MCF 10A (cell line): ENCODE measurements at regions of chr1 and their contacts with region 1.

Region 1: GRCh38 chr1:246699095-246699735 is 25.0 kb upstream of the SCCPDH start:
- DNase-seq: peak; percentile 98
- H3K4me3 Mint-ChIP-seq: peak overlapping the region; percentile 69
- H3K27ac Mint-ChIP-seq: peak overlapping the region; percentile 76
- H3K4me1 Mint-ChIP-seq: peaks cover 14% of the 10 kb centered on the region
- H3K27me3 Mint-ChIP-seq: no peaks in the 10 kb centered on the region
- CTCF ChIP-seq: peak; percentile 96

Region 2: DNA sequence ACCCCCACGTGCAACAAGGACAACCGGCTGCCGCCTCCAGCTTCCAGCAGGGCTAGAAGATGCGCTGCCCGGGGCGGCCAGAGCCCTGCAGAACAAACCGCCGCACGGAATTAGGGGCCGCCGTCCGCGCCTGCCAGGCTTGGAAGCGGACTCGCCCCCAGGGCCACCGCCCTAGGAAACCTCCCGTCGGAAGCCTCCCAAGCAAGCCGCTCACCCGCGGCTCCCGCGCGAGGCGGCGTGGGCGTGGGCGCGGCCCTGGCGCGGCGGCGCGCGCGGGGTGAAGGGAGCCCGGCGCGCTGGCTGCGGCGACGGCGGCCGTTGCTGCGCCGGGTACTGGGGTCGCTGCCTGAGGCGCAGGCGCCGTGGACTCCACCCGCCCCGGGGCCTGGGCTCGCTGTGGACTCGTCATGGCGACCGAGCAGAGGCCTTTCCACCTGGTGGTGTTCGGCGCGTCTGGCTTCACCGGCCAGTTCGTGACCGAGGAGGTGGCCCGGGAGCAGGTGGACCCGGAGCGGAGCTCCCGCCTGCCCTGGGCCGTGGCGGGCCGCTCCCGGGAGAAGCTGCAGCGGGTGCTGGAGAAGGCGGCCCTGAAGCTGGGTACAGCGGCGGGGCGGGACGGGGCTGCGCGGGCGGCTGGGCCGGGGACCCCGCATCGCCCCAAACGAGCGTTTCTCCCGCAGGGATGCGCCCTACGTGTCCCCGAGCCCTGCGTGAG is 25.0 kb after region 1 on chr1 and contains the start of gene SCCPDH:
- CTCF ChIA-PET with region 1: interaction called, 19 read pairs
- POLR2A ChIA-PET with region 1: interaction called, 5 read pairs
- intact Hi-C with region 1: loop called (anchors 2 kb)
- DNase-seq: peak; percentile 63
- H3K4me3 Mint-ChIP-seq: peak within 1 kb of the TSS; percentile 79
- H3K27ac Mint-ChIP-seq: peak within 1 kb of the TSS; percentile 8
- H3K4me1 Mint-ChIP-seq: peaks cover 10% of the 10 kb centered on the region
- H3K27me3 Mint-ChIP-seq: no peaks in the 10 kb centered on the region
- CTCF ChIP-seq: no peak
- total RNA-seq, gene SCCPDH: 28.4 and 32.2 TPM in 2 replicates